MCF 10A (cell line): ENCODE measurements at regions of chr7 and their contacts with region 1.

Region 1: GRCh38 chr7:31373337-31374289 is 33.1 kb upstream of the NEUROD6 start:
- DNase-seq: peak; percentile 62
- H3K4me3 Mint-ChIP-seq: no peak overlapping the region
- H3K27ac Mint-ChIP-seq: no peak overlapping the region
- H3K4me1 Mint-ChIP-seq: no peaks in the 10 kb centered on the region
- H3K27me3 Mint-ChIP-seq: peaks cover 19% of the 10 kb centered on the region
- CTCF ChIP-seq: peak; percentile 82

Region 2: DNA sequence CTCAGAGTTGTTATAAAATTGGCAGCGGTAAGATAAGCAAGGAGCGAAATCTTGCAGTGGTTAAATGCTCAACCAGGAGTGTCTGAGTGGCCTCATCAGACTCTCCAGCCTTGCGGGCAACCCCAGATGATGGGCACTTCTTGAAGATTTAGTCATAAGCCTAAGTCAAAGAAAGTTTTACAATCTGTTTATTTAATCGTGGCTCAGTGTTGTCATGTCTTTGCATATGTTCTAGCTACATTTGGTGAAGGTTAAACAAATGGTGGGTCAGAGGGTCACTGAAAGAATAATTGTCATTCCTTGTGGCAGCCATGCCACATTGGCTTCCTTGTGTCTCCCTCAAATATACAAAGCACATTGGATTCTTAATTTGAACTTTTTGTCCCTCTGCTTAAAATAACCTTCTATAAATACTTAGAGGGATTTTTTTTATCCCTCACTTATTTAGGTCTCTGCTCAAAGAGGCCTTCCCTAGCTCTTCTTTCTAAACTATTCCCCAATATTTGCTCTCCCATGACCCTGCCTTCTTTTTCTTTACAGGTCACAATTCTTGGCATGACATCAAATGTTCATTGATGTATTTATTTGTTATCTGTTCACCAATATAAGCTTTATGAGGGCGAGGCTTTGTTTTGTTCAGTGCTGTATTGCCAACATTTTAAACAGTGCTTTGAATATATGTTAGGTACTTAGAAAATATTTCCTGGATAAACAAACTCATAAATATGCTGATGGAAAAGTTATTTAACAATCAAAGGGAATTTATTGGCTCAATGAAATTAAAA is 101.8 kb before region 1 on chr7:
- CTCF ChIA-PET with region 1: no interaction called
- POLR2A ChIA-PET with region 1: no interaction called
- intact Hi-C with region 1: no loop called
- DNase-seq: no peak
- H3K4me3 Mint-ChIP-seq: no peak overlapping the region
- H3K27ac Mint-ChIP-seq: no peak overlapping the region
- H3K4me1 Mint-ChIP-seq: no peaks in the 10 kb centered on the region
- H3K27me3 Mint-ChIP-seq: peaks cover 37% of the 10 kb centered on the region
- CTCF ChIP-seq: no peak

Region 3: GRCh38 chr7:31345421-31345820 is 28.2 kb before region 1 on chr7:
- CTCF ChIA-PET with region 1: interaction called, 10 read pairs
- POLR2A ChIA-PET with region 1: no interaction called
- intact Hi-C with region 1: no loop called
- DNase-seq: no peak
- H3K4me3 Mint-ChIP-seq: no peak overlapping the region
- H3K27ac Mint-ChIP-seq: no peak overlapping the region
- H3K4me1 Mint-ChIP-seq: no peaks in the 10 kb centered on the region
- H3K27me3 Mint-ChIP-seq: peaks cover 61% of the 10 kb centered on the region
- CTCF ChIP-seq: no peak

Region 4: GRCh38 chr7:31398815-31399214 is 25.2 kb after region 1 on chr7:
- CTCF ChIA-PET with region 1: interaction called, 11 read pairs
- POLR2A ChIA-PET with region 1: no interaction called
- intact Hi-C with region 1: no loop called
- DNase-seq: no peak
- H3K4me3 Mint-ChIP-seq: no peak overlapping the region
- H3K27ac Mint-ChIP-seq: no peak overlapping the region
- H3K4me1 Mint-ChIP-seq: no peaks in the 10 kb centered on the region
- H3K27me3 Mint-ChIP-seq: no peaks in the 10 kb centered on the region
- CTCF ChIP-seq: no peak

Region 5: DNA sequence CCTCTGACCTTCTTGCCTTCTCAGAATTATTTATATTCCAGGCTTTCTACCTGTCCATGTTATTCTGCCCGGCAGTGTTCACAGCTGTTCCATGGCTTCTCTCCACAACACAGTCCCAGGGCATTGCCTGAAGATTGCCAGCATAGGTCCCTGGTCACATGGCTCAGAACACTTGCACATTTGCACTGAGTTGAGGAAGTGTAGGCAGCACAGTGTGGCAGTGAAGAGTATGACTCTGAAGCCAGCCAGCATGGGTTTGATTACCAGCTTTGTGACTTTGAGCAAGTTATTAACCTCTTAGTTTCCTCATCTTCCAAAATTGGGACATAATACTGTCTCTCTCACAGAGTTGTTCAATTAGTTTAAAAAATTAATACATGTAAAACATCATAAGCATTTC is 40.2 kb after region 1 on chr7:
- CTCF ChIA-PET with region 1: interaction called, 12 read pairs
- POLR2A ChIA-PET with region 1: no interaction called
- intact Hi-C with region 1: no loop called
- DNase-seq: no peak
- H3K4me3 Mint-ChIP-seq: no peak overlapping the region
- H3K27ac Mint-ChIP-seq: no peak overlapping the region
- H3K4me1 Mint-ChIP-seq: no peaks in the 10 kb centered on the region
- H3K27me3 Mint-ChIP-seq: no peaks in the 10 kb centered on the region
- CTCF ChIP-seq: no peak

Region 6: DNA sequence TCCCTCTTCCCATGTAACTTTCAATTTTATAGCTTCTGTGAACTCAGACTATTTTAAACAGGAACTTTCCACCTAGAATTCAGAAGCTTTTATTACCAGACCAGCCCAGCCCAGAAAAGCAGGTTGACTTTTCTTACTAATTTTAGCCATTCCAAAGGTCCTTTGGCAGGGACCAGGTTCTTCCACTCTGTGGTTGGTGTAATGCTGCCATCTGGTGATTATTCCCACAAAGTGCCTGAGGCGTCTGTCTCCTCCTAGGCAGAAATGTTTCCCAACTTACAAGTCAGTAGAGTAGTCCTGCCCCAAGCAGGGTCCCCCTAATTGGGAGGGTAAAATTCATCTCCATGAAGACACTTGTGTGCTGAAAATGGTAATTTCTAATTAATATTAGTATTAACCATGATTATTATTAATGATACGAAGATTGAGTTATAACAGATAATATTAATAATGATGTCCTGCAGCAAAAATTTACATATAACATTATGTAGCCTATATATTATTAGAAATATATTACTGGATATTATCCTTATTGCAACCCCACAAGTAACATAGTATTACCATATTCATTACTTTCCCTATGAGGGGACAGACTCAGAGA is 260.4 kb after region 1 on chr7:
- CTCF ChIA-PET with region 1: interaction called, 103 read pairs
- POLR2A ChIA-PET with region 1: interaction called, 3 read pairs
- intact Hi-C with region 1: loop called (anchors 1 kb)
- DNase-seq: peak; percentile 67
- H3K4me3 Mint-ChIP-seq: no peak overlapping the region
- H3K27ac Mint-ChIP-seq: no peak overlapping the region
- H3K4me1 Mint-ChIP-seq: no peaks in the 10 kb centered on the region
- H3K27me3 Mint-ChIP-seq: no peaks in the 10 kb centered on the region
- CTCF ChIP-seq: peak; percentile 76

Region 7: DNA sequence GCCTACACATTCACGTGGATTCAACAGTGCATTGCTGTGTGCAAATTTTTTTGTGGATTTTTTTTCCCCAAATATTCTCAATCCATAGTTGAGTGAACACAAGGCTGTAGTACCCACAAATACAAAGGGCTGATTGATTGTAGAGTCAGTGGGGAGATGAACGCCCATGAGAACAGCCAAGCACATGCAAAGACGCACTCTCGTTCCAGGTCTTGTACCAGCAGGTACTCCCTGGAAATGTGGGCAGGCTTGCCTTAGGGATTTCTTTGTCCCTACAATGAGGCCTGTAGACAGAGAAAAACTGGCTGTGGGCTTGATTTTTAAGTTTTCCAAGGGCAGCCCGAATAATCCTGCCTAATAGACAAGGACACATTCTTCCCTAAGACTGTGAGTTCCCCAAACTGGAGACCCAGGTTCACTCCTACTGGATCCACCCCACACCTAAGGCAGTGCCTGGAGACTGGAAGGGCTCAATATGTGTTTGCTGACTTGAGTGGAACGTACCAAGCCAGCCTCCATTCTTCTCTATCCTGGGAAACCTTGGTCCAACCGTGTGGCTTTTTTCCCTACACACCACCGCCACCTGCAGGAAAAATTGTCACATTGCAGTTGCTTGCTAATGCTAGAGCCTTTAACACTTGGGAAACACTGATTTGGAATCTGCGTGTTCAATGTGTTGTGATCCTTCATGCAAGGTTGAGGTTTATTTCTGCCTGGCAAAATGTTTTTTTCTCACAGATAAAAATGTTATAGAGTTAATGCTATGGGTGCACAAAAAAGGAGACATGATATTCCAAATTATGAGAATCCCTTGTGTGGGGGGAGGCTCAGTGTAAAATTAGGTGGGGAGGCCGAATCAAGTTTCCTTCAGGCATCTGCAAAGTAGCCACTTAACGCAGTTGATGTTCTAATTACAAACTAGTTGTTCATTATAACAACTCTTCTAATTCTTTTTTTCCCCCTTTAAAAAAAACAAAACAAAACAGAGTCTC is 362.7 kb after region 1 on chr7:
- CTCF ChIA-PET with region 1: interaction called, 20 read pairs
- POLR2A ChIA-PET with region 1: no interaction called
- intact Hi-C with region 1: loop called (anchors 1 kb)
- DNase-seq: peak; percentile 81
- H3K4me3 Mint-ChIP-seq: no peak overlapping the region
- H3K27ac Mint-ChIP-seq: no peak overlapping the region
- H3K4me1 Mint-ChIP-seq: peaks cover 6% of the 10 kb centered on the region
- H3K27me3 Mint-ChIP-seq: peaks cover 24% of the 10 kb centered on the region
- CTCF ChIP-seq: peak; percentile 86